Calu3 (cell line): ENCODE measurements at regions of chr6 and their contacts with region 1.

Region 1: GRCh38 chr6:142885182-142885867 is 59.7 kb downstream of the HIVEP2 start:
- DNase-seq: peak; percentile 71
- H3K4me3 Mint-ChIP-seq: peak overlapping the region; percentile 47
- H3K27ac Mint-ChIP-seq: peak overlapping the region; percentile 80
- H3K4me1 Mint-ChIP-seq: peaks cover 38% of the 10 kb centered on the region
- H3K27me3 Mint-ChIP-seq: no peaks in the 10 kb centered on the region
- CTCF ChIP-seq: no peak

Region 2: GRCh38 chr6:142297996-142298753 is 587.1 kb before region 1 on chr6:
- CTCF ChIA-PET with region 1: no interaction called
- intact Hi-C with region 1: no loop called
- DNase-seq: no peak
- H3K4me3 Mint-ChIP-seq: no peak overlapping the region
- H3K27ac Mint-ChIP-seq: peak overlapping the region; percentile 16
- H3K4me1 Mint-ChIP-seq: peaks cover 27% of the 10 kb centered on the region
- H3K27me3 Mint-ChIP-seq: no peaks in the 10 kb centered on the region
- CTCF ChIP-seq: no peak

Region 3: GRCh38 chr6:142838821-142839685 is 46.3 kb before region 1 on chr6:
- CTCF ChIA-PET with region 1: interaction called, 3 read pairs
- intact Hi-C with region 1: loop called (anchors 2 kb)
- DNase-seq: no peak
- H3K4me3 Mint-ChIP-seq: peak overlapping the region; percentile 50
- H3K27ac Mint-ChIP-seq: peak overlapping the region; percentile 91
- H3K4me1 Mint-ChIP-seq: peaks cover 40% of the 10 kb centered on the region
- H3K27me3 Mint-ChIP-seq: no peaks in the 10 kb centered on the region
- CTCF ChIP-seq: no peak

Region 4: DNA sequence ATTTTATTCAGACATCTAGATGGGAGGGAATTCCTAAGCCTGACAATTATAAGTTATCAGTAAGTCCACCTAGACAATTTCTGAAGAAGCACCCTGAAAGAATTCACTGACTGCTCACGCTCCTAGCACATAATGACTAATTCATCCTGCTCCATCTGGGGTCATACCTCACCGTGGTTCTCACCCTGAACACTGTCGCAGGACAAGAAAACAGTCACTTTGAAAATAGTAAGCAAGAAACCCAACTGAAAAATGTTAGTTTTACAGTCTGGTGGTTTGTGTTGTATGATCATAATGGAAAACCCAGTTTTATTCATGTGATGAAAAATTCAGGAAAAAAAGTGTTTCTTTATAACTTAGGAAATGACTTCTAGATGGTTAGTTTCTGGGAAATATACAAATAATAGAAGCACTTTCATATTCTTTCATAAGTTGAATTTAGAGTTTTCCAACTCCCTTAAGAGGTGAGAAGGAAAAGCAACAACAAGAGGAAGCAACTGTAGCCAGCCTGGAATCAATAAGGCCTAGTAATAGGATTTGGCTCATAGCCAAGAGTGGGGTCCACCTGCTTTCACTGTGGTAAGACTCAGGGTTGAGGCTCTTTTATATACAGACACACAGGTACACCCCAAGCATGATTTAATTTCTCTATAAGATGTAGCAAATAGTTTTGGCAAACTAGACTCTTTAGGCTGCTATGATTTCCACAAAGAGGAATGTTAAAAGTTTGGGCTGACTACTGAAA is 34.5 kb before region 1 on chr6:
- CTCF ChIA-PET with region 1: interaction called, 3 read pairs
- intact Hi-C with region 1: loop called (anchors 5 kb)
- DNase-seq: no peak
- H3K4me3 Mint-ChIP-seq: no peak overlapping the region
- H3K27ac Mint-ChIP-seq: peak overlapping the region; percentile 75
- H3K4me1 Mint-ChIP-seq: peaks cover 79% of the 10 kb centered on the region
- H3K27me3 Mint-ChIP-seq: no peaks in the 10 kb centered on the region
- CTCF ChIP-seq: no peak